Endothelial cell of umbilical vein (primary cell): ENCODE measurements at regions of chr12 and their contacts with region 1.

Region 1: GRCh38 chr12:24852420-24852819 is 96.5 kb downstream of the BCAT1 start:
- DNase-seq: peak; percentile 45
- H3K4me3 ChIP-seq: no peak overlapping the region
- H3K27ac ChIP-seq: peak overlapping the region; percentile 92
- H3K4me1 ChIP-seq: peaks cover 60% of the 10 kb centered on the region
- H3K27me3 ChIP-seq: no peaks in the 10 kb centered on the region
- CTCF ChIP-seq: no peak
- POLR2A ChIP-seq: no peak

Region 2: DNA sequence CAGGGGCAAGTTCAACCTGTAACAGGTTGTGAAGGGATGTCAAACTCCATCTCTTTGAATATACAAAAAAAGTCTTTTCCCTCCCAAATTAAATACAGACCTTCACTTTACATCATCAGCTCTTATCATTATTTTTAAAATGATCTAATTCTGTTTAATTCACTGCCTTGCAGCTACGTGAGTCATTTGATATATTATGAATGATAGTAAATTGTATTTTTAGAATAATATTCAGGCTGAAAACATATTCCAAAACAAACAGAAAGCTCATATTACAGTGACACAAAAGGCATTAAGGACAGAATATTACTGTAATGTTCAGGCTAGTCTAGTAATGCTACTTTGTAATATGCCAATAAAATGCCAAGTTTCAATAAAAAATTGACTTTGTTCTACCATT is 43.2 kb after region 1 on chr12:
- CTCF ChIA-PET with region 1: interaction called, 22 read pairs
- POLR2A ChIA-PET with region 1: interaction called, 5 read pairs
- dilution Hi-C with region 1: no loop called
- intact Hi-C with region 1: no loop called
- DNase-seq: peak; percentile 79
- H3K4me3 ChIP-seq: peak overlapping the region in 1 of 3 experiments; percentile 10
- H3K27ac ChIP-seq: peak overlapping the region; percentile 88
- H3K4me1 ChIP-seq: peaks cover 72% of the 10 kb centered on the region
- H3K27me3 ChIP-seq: no peaks in the 10 kb centered on the region
- CTCF ChIP-seq: no peak
- POLR2A ChIP-seq: no peak

Region 3: DNA sequence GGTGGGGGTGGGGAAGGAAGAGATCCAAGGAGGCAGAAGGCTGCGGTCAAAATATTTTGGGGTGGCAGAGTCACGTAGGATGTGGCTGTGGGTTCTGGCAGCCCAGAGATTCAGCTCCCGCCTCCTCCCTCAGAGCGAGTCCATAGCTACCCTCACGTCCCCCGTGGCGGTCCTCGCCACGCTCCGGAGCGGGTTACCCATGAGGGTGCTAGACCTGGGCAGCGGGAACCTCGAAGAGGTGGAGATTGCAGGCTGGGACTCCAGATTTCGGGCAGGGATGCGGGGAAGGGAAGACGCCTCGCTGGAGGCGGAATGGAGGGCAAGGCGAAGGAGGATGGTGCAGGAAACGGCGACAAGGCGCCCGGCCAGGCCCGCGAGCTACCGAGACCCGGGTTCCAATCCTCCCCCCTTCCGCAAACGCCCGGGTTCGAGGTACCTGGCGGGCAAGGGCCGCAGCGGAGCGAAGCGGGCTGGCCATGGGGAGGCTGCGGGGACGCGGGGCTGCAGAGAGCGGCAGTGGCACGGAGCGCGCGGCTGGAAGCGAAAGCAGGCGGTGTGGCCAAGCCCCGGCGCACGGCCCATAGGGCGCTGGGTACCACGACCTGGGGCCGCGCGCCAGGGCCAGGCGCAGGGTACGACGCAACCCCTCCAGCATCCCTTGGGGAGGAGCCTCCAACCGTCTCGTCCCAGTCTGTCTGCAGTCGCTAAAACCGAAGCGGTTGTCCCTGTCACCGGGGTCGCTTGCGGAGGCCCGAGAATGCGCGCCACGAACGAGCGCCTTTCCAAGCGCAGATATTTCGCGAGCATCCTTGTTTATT is 50.3 kb after region 1 on chr12:
- CTCF ChIA-PET with region 1: interaction called, 22 read pairs
- POLR2A ChIA-PET with region 1: interaction called, 5 read pairs
- dilution Hi-C with region 1: no loop called
- intact Hi-C with region 1: loop called (anchors 1 kb)
- DNase-seq: no peak
- H3K4me3 ChIP-seq: peak overlapping the region; percentile 24 to 94 (median 58)
- H3K27ac ChIP-seq: peak overlapping the region; percentile 100
- H3K4me1 ChIP-seq: peaks cover 61% of the 10 kb centered on the region
- H3K27me3 ChIP-seq: no peaks in the 10 kb centered on the region
- CTCF ChIP-seq: no peak
- POLR2A ChIP-seq: no peak

Region 4: DNA sequence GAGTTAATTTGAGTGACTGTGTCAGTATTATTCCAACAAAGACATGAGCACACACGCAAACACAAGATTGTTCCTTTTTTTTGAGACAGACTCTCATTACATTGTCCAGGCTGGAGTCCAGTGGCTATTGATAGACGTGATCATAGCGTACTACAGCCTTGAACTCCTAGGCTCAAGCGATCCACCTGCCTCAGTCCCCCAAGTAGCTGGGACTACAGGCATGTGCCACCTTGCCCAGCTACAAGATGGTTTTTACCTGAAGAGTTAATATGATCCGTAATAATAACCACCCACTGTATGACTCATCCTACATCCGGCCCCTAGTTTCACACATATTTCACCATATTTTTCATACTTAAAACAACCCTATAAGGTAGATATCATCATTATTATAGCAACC is 69.7 kb after region 1 on chr12:
- CTCF ChIA-PET with region 1: interaction called, 17 read pairs
- POLR2A ChIA-PET with region 1: no interaction called
- dilution Hi-C with region 1: no loop called
- intact Hi-C with region 1: no loop called
- DNase-seq: peak; percentile 56
- H3K4me3 ChIP-seq: no peak overlapping the region
- H3K27ac ChIP-seq: peak overlapping the region; percentile 62
- H3K4me1 ChIP-seq: peaks cover 43% of the 10 kb centered on the region
- H3K27me3 ChIP-seq: no peaks in the 10 kb centered on the region
- CTCF ChIP-seq: no peak
- POLR2A ChIP-seq: no peak

Region 5: GRCh38 chr12:24948757-24949722 is 96.6 kb after region 1 on chr12 and contains the start of gene BCAT1:
- CTCF ChIA-PET with region 1: interaction called, 45 read pairs
- POLR2A ChIA-PET with region 1: interaction called, 7 read pairs
- dilution Hi-C with region 1: no loop called
- intact Hi-C with region 1: loop called (anchors 1 kb)
- DNase-seq: peak; percentile 88
- H3K4me3 ChIP-seq: peak within 1 kb of the TSS; percentile 58 to 95 (median 78)
- H3K27ac ChIP-seq: peak within 1 kb of the TSS; percentile 96
- H3K4me1 ChIP-seq: peaks cover 36% of the 10 kb centered on the region
- H3K27me3 ChIP-seq: no peaks in the 10 kb centered on the region
- CTCF ChIP-seq: peak; percentile 17 to 44
- POLR2A ChIP-seq: peak; percentile 61
- total RNA-seq, gene BCAT1: 267 and 296 TPM in 2 replicates

Region 6: GRCh38 chr12:24960222-24960855 is 107.9 kb after region 1 on chr12:
- CTCF ChIA-PET with region 1: interaction called, 4 read pairs
- POLR2A ChIA-PET with region 1: no interaction called
- dilution Hi-C with region 1: no loop called
- intact Hi-C with region 1: loop called (anchors 5 kb)
- DNase-seq: peak; percentile 66
- H3K4me3 ChIP-seq: no peak overlapping the region
- H3K27ac ChIP-seq: no peak overlapping the region
- H3K4me1 ChIP-seq: no peaks in the 10 kb centered on the region
- H3K27me3 ChIP-seq: peaks cover 0 to 2% of the 10 kb centered on the region in 2 experiments
- CTCF ChIP-seq: peak; percentile 73 to 79
- POLR2A ChIP-seq: no peak

Region 7: DNA sequence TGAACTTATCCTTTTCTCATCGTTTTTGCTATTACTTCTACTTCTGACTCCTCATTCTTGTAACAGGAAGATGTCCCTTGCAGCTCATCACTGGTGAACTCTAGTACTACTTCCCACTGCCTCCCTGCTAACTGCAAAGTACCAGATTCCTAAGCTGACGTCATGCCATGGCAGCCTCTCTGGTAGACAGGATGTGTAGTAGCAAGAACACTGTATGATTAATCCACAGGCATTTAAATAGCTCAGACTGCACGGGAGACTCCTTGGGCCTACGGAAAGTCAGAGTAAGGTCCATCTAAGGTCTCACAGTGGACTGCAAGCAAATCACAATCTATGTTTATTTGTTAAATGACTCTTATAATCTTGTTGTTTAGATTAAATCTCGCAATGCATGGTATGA is 299.1 kb after region 1 on chr12:
- CTCF ChIA-PET with region 1: interaction called, 4 read pairs
- POLR2A ChIA-PET with region 1: no interaction called
- dilution Hi-C with region 1: no loop called
- intact Hi-C with region 1: loop called (anchors 10 kb)
- DNase-seq: peak; percentile 84
- H3K4me3 ChIP-seq: no peak overlapping the region
- H3K27ac ChIP-seq: peak overlapping the region; percentile 45
- H3K4me1 ChIP-seq: peaks cover 6% of the 10 kb centered on the region
- H3K27me3 ChIP-seq: no peaks in the 10 kb centered on the region
- CTCF ChIP-seq: no peak
- POLR2A ChIP-seq: no peak